Right cardiac atrium (tissue), 5 donors: ENCODE measurements at regions of chr14 and their contacts with region 1.

Region 1: GRCh38 chr14:24093901-24094761 is at the start of gene PCK2:
- DNase-seq: peak; percentile 95 to 97 (median 97)
- ATAC-seq: peak; percentile 95
- H3K4me3 ChIP-seq: peak within 1 kb of the TSS; percentile 65
- H3K27ac ChIP-seq: peak within 1 kb of the TSS; percentile 83
- H3K4me1 ChIP-seq: peaks cover 6% of the 10 kb centered on the region
- H3K27me3 ChIP-seq: no peaks in the 10 kb centered on the region
- total RNA-seq, gene PCK2: 4.0 to 11.0 (median 5.3) TPM

Region 2: GRCh38 chr14:22852940-22853767 is 1241.0 kb before region 1 on chr14:
- intact Hi-C with region 1: no loop called
- DNase-seq: peak; percentile 85 to 96 (median 96)
- ATAC-seq: peak; percentile 46 to 58
- H3K4me3 ChIP-seq: peak overlapping the region; percentile 46
- H3K27ac ChIP-seq: no peak overlapping the region
- H3K4me1 ChIP-seq: peaks cover 21% of the 10 kb centered on the region
- H3K27me3 ChIP-seq: no peaks in the 10 kb centered on the region

Region 3: GRCh38 chr14:23787436-23787835 is 306.7 kb before region 1 on chr14:
- intact Hi-C with region 1: no loop called
- DNase-seq: no peak
- ATAC-seq: no peak
- H3K4me3 ChIP-seq: no peak overlapping the region
- H3K27ac ChIP-seq: no peak overlapping the region
- H3K4me1 ChIP-seq: no peaks in the 10 kb centered on the region
- H3K27me3 ChIP-seq: no peaks in the 10 kb centered on the region

Region 4: GRCh38 chr14:23984891-23985602 is 109.1 kb before region 1 on chr14:
- intact Hi-C with region 1: loop called in 2 of 4 experiments (anchors 10 kb)
- DNase-seq: peak in 2 of 3 donors; percentile 20 to 33
- ATAC-seq: peak; percentile 47 to 67
- H3K4me3 ChIP-seq: no peak overlapping the region
- H3K27ac ChIP-seq: no peak overlapping the region
- H3K4me1 ChIP-seq: no peaks in the 10 kb centered on the region
- H3K27me3 ChIP-seq: no peaks in the 10 kb centered on the region

Region 5: DNA sequence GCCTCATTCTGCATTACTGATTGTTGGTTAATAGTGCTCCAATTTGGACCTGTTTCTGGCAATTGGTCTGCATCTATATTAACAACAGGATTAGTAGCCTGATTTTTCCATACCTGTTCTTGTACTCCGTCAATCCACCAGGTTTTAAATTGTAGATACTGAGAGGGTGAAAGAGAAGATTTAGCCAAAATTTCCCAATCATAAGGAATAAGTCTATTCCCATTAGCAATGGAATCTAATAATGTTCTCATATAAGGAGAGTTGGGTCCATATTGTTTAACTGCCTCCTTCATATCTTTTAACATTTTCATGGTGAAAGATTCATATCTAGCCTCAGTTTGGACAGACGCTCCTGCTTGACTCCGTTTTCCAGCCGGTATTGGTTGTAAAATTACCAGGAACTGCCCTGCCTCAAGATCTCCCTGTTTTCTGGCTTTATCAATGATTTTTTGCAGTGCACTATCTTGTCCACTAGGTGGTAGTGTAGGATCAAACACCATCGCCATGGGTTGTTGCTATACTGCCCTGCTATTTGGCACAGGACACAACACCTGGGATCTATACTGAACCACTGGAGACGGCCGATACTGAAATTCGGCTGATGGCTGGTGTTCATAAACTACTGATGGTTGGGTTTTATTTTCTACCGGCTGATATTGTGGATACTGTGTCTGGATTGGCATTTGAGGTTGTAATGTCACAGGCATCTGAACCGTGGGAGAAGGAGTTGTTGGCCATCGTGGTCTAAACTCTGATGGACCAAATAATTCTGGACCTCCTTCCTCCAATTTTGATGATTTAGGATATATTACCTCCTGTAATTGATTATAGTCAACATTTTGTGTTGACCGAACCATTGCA is 80.2 kb before region 1 on chr14:
- intact Hi-C with region 1: loop called (anchors 2 to 5 kb)
- DNase-seq: no peak
- ATAC-seq: peak; percentile 66 to 88
- H3K4me3 ChIP-seq: no peak overlapping the region
- H3K27ac ChIP-seq: no peak overlapping the region
- H3K4me1 ChIP-seq: no peaks in the 10 kb centered on the region
- H3K27me3 ChIP-seq: no peaks in the 10 kb centered on the region

Region 6: DNA sequence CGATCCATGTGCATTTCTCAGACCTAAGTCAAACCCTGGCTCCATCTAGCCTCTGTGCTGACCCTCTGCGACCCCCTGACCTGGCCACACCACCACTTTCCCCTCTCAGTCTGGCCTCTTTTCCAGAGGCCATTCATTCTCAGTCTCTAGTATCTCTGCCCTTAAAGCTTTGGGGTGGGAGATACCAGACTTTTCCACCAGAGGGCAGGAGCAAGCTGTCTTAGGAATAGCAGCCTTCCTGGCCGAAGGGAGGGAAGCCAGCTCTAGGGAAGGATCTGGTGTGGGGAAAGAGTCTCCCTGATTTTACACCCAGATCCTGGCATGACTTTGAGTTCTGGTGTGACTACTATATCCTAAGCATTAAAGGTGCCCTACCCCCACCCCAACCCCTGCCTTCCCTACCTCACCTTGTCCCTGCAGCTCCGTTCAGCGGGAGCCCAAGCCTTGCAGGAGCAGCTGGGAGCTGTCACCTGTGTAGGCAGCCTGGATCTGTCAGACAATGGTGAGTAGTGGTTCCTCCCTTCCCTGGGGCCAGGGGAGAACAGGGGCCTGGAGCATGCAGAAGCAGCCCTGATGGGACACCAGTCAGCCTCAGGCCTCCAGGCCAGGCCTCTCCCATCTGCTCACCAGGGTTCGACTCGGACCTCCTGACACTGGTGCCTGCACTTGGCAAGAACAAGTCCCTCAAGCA is 35.7 kb before region 1 on chr14:
- intact Hi-C with region 1: loop called in 1 of 4 experiments (anchors 5 kb)
- DNase-seq: peak in 2 of 3 donors; percentile 63 to 83
- ATAC-seq: peak; percentile 72 to 74
- H3K4me3 ChIP-seq: no peak overlapping the region
- H3K27ac ChIP-seq: no peak overlapping the region
- H3K4me1 ChIP-seq: no peaks in the 10 kb centered on the region
- H3K27me3 ChIP-seq: no peaks in the 10 kb centered on the region

Region 7: DNA sequence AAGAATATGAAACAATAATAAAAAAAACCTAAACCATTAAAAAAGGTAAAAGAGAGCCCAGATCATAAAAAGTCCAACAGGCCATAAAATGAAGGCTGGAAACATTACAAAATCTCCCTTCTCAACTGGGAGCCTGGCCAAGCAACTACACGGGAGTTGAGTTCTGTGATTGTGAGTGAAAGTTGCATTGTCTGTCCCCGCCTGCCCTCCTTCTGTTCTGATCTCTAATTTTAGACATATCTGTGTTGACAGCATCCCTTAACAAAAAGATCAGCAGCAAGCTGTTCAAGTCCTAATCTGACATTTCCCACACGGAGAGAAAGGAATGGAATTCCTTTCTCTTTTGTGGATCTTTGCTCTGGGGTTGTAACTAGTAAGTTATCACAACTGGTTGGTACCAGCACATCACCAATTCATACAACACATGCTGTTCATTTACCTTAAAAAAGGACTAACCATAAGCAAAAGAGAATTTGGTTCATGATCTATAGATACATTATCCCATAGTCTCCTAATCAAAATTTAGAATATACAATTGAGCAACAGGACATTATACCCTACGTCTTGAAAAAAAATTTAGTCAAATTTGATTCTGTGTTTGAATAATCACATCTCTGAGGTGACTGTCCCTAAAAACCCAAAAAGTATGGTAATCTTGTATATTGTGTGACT is 745.0 kb after region 1 on chr14:
- intact Hi-C with region 1: no loop called
- DNase-seq: peak in 1 of 3 donors; percentile 57
- ATAC-seq: peak; percentile 78 to 84
- H3K4me3 ChIP-seq: no peak overlapping the region
- H3K27ac ChIP-seq: peak overlapping the region; percentile 58
- H3K4me1 ChIP-seq: peaks cover 3% of the 10 kb centered on the region
- H3K27me3 ChIP-seq: no peaks in the 10 kb centered on the region